Esophagus squamous epithelium (tissue), 5 donors: ENCODE measurements at regions of chr6 and their contacts with region 1.

Region 1: GRCh38 chr6:114747987-114748630 is 405.3 kb upstream of the HS3ST5 start:
- DNase-seq: no peak
- H3K4me3 ChIP-seq: no peak overlapping the region
- H3K27ac ChIP-seq: no peak overlapping the region
- H3K4me1 ChIP-seq: no peaks in the 10 kb centered on the region
- H3K27me3 ChIP-seq: no peaks in the 10 kb centered on the region
- CTCF ChIP-seq: peak; percentile 26 to 68 (median 46)
- POLR2A ChIP-seq: no peak

Region 2: GRCh38 chr6:114600381-114600780 is 147.7 kb before region 1 on chr6:
- intact Hi-C with region 1: no loop called
- DNase-seq: no peak
- H3K4me3 ChIP-seq: no peak overlapping the region
- H3K27ac ChIP-seq: no peak overlapping the region
- H3K4me1 ChIP-seq: no peaks in the 10 kb centered on the region
- H3K27me3 ChIP-seq: no peaks in the 10 kb centered on the region
- CTCF ChIP-seq: no peak
- POLR2A ChIP-seq: no peak

Region 3: GRCh38 chr6:114810468-114810867 is 62.4 kb after region 1 on chr6:
- intact Hi-C with region 1: no loop called
- DNase-seq: no peak
- H3K4me3 ChIP-seq: no peak overlapping the region
- H3K27ac ChIP-seq: no peak overlapping the region
- H3K4me1 ChIP-seq: no peaks in the 10 kb centered on the region
- H3K27me3 ChIP-seq: no peaks in the 10 kb centered on the region
- CTCF ChIP-seq: no peak
- POLR2A ChIP-seq: no peak

Region 4: DNA sequence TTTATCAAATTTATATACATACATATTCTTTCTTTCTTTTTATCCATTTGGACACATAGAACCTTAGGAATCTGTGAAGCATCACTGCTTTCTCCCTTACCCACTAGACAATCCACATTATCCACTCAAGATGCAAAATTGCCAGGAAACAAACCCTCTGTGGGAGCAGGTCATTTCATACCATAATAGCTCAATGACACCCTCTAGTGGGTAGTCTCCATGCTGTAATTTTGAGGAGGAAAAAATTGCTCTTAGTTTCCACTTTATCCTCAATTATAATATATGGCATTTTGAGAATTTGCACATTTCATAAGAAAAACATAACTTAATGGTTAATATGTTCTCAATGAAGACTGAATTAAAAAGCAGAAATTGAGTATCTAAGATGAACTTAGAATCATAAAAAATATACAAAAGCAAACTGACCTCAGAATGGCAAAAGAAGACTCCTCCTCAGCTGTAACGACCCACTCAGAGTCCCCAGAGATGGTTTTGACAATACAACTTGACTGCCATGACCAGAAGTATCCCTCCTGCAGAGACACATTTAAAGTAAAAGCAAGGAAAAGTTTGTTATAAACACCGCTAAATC is 1148.5 kb after region 1 on chr6:
- intact Hi-C with region 1: loop called (anchors 10 kb)
- DNase-seq: no peak
- H3K4me3 ChIP-seq: no peak overlapping the region
- H3K27ac ChIP-seq: no peak overlapping the region
- H3K4me1 ChIP-seq: no peaks in the 10 kb centered on the region
- H3K27me3 ChIP-seq: no peaks in the 10 kb centered on the region
- CTCF ChIP-seq: peak in 5 of 6 experiments; percentile 40 to 70 (median 44)
- POLR2A ChIP-seq: no peak